SK-N-SH (cell line): ENCODE measurements at regions of chr1 and their contacts with region 1.

Region 1: DNA sequence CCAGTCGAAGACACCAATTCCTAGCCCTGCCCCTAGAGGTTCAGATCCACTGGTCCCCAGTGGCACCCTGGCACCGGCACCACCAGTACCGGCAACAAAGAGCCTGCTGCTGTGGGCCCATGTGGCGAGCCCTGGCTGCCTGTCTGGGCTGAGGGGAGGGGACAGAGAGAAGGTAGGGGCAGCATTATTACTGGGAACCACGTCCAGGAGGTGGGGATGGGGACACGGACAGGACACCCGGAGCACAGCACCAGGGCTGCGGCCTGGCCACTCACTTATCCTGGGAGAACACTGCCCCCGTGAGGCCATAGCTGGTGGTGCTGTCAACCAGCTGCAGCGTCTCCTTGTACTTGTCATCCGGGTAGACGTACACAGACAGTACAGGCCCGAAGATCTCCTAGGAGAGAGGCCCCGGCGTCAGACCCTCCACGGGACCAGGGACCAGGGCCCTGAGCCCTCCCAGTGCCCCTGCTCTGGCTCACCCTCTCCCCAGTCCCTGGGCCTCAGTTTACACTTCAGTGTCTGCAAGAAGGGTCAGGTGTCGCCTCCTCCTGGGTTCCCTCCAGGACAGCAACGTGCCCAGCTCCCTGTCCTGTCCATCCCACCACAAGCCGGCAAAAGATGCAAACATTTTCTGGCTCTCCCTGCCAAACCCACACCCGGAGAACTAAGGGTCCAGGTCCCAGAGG is 15.8 kb upstream of the TAS1R2 start:
- DNase-seq: peak; percentile 96
- H3K4me3 ChIP-seq: no peak overlapping the region; a peak in 1 of 4 replicates
- H3K27ac ChIP-seq: no peak overlapping the region
- H3K4me1 ChIP-seq: peaks cover 0 to 8% of the 10 kb centered on the region in 2 experiments; a peak in 1 of 4 replicates
- H3K27me3 ChIP-seq: no peaks in the 10 kb centered on the region
- CTCF ChIP-seq: peak; percentile 80
- EP300 ChIP-seq: no peak
- RAD21 ChIP-seq: peak; percentile 93

Region 2: DNA sequence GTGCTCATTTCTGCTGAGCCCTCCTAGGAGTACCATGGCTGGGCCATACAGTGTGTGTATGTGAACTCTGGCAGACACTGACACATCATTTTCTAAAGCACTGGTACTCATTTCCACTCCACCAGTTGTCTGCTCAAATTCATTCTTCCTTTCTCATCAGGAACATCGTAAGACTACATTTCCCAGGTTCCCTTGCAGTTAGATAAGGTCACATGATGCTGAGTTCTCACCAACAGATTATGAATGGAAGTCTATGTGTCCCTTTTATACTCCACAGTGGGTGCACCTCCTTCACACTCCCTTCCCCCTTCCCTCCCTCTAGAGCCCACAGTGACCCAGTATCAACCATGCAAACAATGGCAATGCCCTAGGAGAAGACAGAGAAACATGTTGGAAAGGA is 282.9 kb before region 1 on chr1:
- CTCF ChIA-PET with region 1: interaction called, 350 read pairs
- POLR2A ChIA-PET with region 1: no interaction called
- DNase-seq: no peak
- H3K4me3 ChIP-seq: no peak overlapping the region
- H3K27ac ChIP-seq: no peak overlapping the region
- H3K4me1 ChIP-seq: no peaks in the 10 kb centered on the region
- H3K27me3 ChIP-seq: no peaks in the 10 kb centered on the region; the same call in 1 of the 2 replicates
- CTCF ChIP-seq: no peak
- EP300 ChIP-seq: no peak
- RAD21 ChIP-seq: no peak

Region 3: GRCh38 chr1:18820791-18821641 is 54.2 kb before region 1 on chr1:
- CTCF ChIA-PET with region 1: interaction called, 44 read pairs
- POLR2A ChIA-PET with region 1: no interaction called
- DNase-seq: peak; percentile 89
- H3K4me3 ChIP-seq: peak overlapping the region in 1 of 2 experiments; percentile 24; a peak in 1 of 4 replicates
- H3K27ac ChIP-seq: no peak overlapping the region
- H3K4me1 ChIP-seq: peaks cover 0 to 6% of the 10 kb centered on the region in 2 experiments; a peak in 1 of 4 replicates
- H3K27me3 ChIP-seq: no peaks in the 10 kb centered on the region
- CTCF ChIP-seq: peak; percentile 82
- EP300 ChIP-seq: no peak
- RAD21 ChIP-seq: peak; percentile 90

Region 4: DNA sequence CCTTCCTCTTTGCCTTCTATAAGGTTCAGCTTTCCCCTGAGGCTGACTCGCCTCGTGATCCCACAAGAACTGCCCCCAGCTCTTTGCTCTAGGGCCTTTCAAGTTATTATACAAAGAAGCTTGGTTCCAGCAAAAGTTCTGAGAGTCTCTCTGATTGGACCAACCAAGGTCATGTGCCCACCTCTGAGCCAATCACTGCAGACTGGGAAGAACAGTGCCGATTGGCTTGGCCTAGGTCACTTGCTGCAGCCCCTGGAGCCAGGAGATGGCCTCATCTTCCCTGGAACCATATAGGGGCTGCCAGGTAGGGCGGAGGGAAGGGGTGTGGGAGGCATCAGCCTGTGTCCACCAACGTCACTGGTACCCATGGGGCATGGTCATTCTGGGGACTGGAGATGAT is 38.6 kb before region 1 on chr1:
- CTCF ChIA-PET with region 1: interaction called, 17 read pairs
- POLR2A ChIA-PET with region 1: no interaction called
- DNase-seq: peak; percentile 41
- H3K4me3 ChIP-seq: no peak overlapping the region
- H3K27ac ChIP-seq: no peak overlapping the region
- H3K4me1 ChIP-seq: peaks cover 0 to 1% of the 10 kb centered on the region in 2 experiments; a peak in 1 of 4 replicates
- H3K27me3 ChIP-seq: no peaks in the 10 kb centered on the region; the same call in 1 of the 2 replicates
- CTCF ChIP-seq: no peak
- EP300 ChIP-seq: no peak
- RAD21 ChIP-seq: no peak

Region 5: GRCh38 chr1:18861082-18861481 is 14.2 kb before region 1 on chr1:
- CTCF ChIA-PET with region 1: interaction called, 30 read pairs
- POLR2A ChIA-PET with region 1: no interaction called
- DNase-seq: no peak
- H3K4me3 ChIP-seq: no peak overlapping the region
- H3K27ac ChIP-seq: no peak overlapping the region
- H3K4me1 ChIP-seq: no peaks in the 10 kb centered on the region
- H3K27me3 ChIP-seq: peaks cover 6% of the 10 kb centered on the region; the same call in 1 of the 2 replicates
- CTCF ChIP-seq: no peak
- EP300 ChIP-seq: no peak
- RAD21 ChIP-seq: no peak